MCF 10A (cell line): ENCODE measurements at regions of chr16 and their contacts with region 1.

Region 1: GRCh38 chr16:82263521-82264143 is 93.6 kb upstream of the MPHOSPH6 start:
- DNase-seq: peak; percentile 75
- H3K4me3 Mint-ChIP-seq: no peak overlapping the region
- H3K27ac Mint-ChIP-seq: no peak overlapping the region
- H3K4me1 Mint-ChIP-seq: no peaks in the 10 kb centered on the region
- H3K27me3 Mint-ChIP-seq: peaks cover 75% of the 10 kb centered on the region
- CTCF ChIP-seq: peak; percentile 91

Region 2: DNA sequence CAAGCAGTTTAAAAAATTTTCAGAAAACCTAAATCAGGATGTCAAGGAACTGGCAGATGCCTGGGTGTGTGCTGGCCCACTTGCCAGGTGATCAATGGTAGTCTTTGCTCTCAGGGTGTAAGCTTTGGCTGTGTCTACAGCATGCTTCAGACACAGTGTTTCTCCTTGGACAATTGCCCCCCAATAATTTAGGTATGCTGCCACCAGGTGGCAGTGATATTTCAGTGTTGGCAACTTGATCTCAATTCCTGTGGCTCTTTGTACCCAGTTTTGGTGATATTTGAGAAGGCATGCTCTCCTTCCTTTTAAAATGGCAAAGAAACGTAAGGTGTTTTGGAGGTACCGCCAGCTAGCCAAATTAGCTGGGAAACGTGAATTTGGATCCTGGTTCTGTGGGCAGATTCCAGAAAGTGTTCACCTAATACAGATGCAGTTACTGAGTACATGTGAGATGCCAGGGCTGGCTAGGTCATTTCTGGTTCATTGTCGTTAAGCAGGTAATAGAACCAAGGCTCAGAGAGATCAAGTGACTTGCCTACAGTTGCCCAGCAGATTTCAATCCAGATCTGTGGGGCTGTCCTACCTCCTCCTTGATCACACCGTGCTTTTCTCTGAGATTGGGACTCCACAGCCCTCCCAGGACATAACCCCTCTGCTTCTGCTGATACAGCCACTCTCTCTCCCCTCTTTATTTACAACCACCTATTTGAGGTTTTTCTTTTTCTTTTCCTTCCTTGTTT is 640.1 kb before region 1 on chr16:
- CTCF ChIA-PET with region 1: no interaction called
- POLR2A ChIA-PET with region 1: no interaction called
- intact Hi-C with region 1: no loop called
- DNase-seq: peak; percentile 73
- H3K4me3 Mint-ChIP-seq: no peak overlapping the region
- H3K27ac Mint-ChIP-seq: no peak overlapping the region
- H3K4me1 Mint-ChIP-seq: peaks cover 9% of the 10 kb centered on the region
- H3K27me3 Mint-ChIP-seq: no peaks in the 10 kb centered on the region
- CTCF ChIP-seq: peak; percentile 64

Region 3: GRCh38 chr16:81940781-81941560 is 322.7 kb before region 1 on chr16:
- CTCF ChIA-PET with region 1: interaction called, 19 read pairs
- POLR2A ChIA-PET with region 1: no interaction called
- intact Hi-C with region 1: no loop called
- DNase-seq: peak; percentile 66
- H3K4me3 Mint-ChIP-seq: no peak overlapping the region
- H3K27ac Mint-ChIP-seq: no peak overlapping the region
- H3K4me1 Mint-ChIP-seq: peaks cover 7% of the 10 kb centered on the region
- H3K27me3 Mint-ChIP-seq: no peaks in the 10 kb centered on the region
- CTCF ChIP-seq: peak; percentile 62

Region 4: DNA sequence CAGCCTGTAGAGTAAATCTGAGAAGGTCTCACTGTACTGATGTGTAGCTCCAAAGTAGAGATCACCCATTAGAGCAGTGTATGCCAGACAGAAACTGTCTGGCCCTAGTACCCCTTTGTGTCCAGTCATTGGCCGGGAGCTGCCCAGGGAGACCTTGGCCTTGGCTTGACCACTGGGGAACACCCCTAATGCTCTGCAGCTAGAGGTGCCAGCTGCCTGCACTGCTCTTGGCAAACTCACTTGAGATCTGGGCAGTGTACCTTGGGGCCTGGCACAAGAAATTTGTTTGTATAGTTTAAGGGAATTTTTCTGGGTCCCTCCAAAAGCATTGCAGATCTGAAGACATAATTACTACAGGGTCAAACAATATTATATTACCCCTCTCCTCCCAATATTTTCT is 15.0 kb before region 1 on chr16:
- CTCF ChIA-PET with region 1: interaction called, 51 read pairs
- POLR2A ChIA-PET with region 1: no interaction called
- intact Hi-C with region 1: no loop called
- DNase-seq: no peak
- H3K4me3 Mint-ChIP-seq: no peak overlapping the region
- H3K27ac Mint-ChIP-seq: no peak overlapping the region
- H3K4me1 Mint-ChIP-seq: no peaks in the 10 kb centered on the region
- H3K27me3 Mint-ChIP-seq: peaks cover 48% of the 10 kb centered on the region
- CTCF ChIP-seq: no peak

Region 5: DNA sequence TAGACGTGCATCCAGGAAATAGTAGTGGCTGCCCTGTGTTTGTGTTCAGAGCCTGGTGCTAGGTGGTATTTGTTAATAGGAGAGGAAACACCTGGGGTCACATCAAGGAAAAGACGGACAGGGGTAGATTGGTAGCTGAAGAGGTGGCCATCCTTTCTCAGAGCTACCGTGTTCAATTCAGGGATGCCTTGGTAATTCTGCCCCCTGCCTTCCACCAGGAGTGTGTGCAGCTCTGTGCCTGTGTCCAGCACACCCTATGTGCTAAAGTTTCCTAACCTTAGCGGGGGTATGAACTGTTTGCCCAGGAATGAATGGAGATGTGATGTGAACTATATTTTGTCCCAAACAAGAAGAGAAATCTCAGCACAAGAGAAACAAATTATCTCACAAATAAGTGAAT is 80.5 kb after region 1 on chr16:
- CTCF ChIA-PET with region 1: interaction called, 8 read pairs
- POLR2A ChIA-PET with region 1: no interaction called
- intact Hi-C with region 1: loop called (anchors 2 kb)
- DNase-seq: peak; percentile 39
- H3K4me3 Mint-ChIP-seq: no peak overlapping the region
- H3K27ac Mint-ChIP-seq: no peak overlapping the region
- H3K4me1 Mint-ChIP-seq: no peaks in the 10 kb centered on the region
- H3K27me3 Mint-ChIP-seq: peaks cover 80% of the 10 kb centered on the region
- CTCF ChIP-seq: peak; percentile 23

Region 6: GRCh38 chr16:82603784-82604411 is 340.3 kb after region 1 on chr16:
- CTCF ChIA-PET with region 1: interaction called, 15 read pairs
- POLR2A ChIA-PET with region 1: no interaction called
- intact Hi-C with region 1: no loop called
- DNase-seq: peak; percentile 64
- H3K4me3 Mint-ChIP-seq: no peak overlapping the region
- H3K27ac Mint-ChIP-seq: no peak overlapping the region
- H3K4me1 Mint-ChIP-seq: no peaks in the 10 kb centered on the region
- H3K27me3 Mint-ChIP-seq: no peaks in the 10 kb centered on the region
- CTCF ChIP-seq: peak; percentile 59

Region 7: GRCh38 chr16:83215406-83216001 is 951.9 kb after region 1 on chr16:
- CTCF ChIA-PET with region 1: interaction called, 49 read pairs
- POLR2A ChIA-PET with region 1: no interaction called
- intact Hi-C with region 1: loop called (anchors 1 kb)
- DNase-seq: peak; percentile 59
- H3K4me3 Mint-ChIP-seq: no peak overlapping the region
- H3K27ac Mint-ChIP-seq: no peak overlapping the region
- H3K4me1 Mint-ChIP-seq: no peaks in the 10 kb centered on the region
- H3K27me3 Mint-ChIP-seq: no peaks in the 10 kb centered on the region
- CTCF ChIP-seq: peak; percentile 87